CD8-positive, alpha-beta memory T cell (primary cell): ENCODE measurements at regions of chr7 and their contacts with region 1.

Region 1: DNA sequence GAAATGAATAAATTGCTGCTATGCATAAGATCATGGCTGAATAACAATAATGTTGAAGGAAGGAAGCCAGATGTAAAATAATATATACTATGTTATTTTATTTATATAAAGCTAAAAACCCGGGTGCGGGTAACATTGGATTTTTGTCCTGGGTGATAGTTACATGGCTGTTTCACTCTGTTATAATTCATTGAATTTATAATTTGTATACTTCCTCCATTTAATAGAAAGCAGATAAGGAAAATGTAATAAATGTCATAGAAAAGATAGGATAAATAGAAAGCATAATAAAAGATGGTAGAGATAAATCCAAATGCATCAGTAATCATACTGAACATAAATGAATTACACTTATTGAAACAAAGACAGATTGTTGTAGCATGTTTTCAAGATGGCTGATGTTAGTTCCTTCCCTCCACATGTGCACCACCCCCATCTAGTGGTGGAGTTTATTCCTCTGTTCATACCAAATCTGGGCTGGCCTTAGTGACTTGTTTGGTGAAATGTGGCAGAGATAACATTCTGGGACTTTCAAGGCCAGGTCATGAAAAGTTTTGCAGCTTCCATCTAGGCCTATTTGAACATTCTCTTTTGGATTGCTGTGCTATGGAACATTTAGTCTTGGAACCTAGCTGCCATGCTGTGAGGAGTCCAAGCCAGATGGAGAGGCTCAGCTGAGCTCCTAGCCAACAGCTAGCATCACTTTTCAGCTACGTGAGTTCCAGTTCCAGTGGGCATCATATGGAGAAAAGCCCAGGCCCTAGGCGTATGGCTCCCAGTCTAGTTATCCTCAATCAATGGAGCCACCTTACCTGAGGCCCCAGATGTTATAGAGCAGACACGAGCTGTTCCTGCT is 46.9 kb downstream of the AHCYL2 start:
- DNase-seq: peak; percentile 35 to 74 (median 58)
- H3K4me3 ChIP-seq: no peak overlapping the region
- H3K4me3 Mint-ChIP-seq: peak overlapping the region in 3 of 7 donors; percentile 53 to 62 (median 57)
- H3K27ac ChIP-seq: no peak overlapping the region
- H3K27ac Mint-ChIP-seq: peak overlapping the region in 3 of 8 donors; percentile 26 to 81 (median 71)
- H3K4me1 ChIP-seq: no peaks in the 10 kb centered on the region
- H3K4me1 Mint-ChIP-seq: peaks cover 3 to 5% (median 3%) of the 10 kb centered on the region in 3 donors
- H3K27me3 ChIP-seq: no peaks in the 10 kb centered on the region
- H3K27me3 Mint-ChIP-seq: no peaks in the 10 kb centered on the region

Region 2: DNA sequence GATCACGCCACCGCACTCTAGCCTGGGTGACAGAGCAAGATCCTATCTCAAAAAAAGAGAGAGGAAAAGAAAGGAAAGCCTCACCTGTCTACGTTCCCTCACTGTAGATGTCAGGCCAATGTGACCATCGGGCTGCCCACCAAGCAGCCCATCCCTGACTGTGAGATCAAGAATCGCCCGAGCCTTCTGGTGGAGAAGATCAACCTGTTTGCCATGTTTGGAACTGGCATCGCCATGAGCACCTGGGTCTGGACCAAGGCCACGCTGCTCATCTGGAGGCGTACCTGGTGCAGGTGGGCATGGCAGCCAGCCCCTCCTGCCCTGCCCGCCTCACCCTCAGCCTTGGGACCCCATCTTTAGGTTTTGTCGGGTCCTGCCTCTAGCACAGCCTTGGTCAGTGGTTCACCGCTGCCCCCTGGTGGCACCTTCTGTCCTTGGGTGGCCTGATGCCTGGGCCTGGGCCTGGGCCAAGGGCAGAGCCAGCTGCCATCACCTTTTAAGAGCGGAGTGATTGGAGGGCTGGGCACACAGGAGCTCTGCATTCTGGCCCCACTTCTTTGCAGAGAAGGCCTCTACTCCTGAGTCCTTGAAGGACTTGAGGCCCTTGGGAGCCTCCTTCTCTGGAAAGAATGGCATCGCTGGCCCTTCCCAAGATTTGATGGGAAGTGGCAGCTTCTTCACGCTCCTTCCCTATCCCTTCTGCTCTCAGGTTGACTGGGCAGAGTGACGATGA is 61.3 kb before region 1 on chr7:
- CTCF ChIA-PET with region 1: interaction called, 13 read pairs
- POLR2A ChIA-PET with region 1: no interaction called
- DNase-seq: peak; percentile 30 to 65 (median 39)
- H3K4me3 ChIP-seq: no peak overlapping the region
- H3K4me3 Mint-ChIP-seq: no peak overlapping the region
- H3K27ac ChIP-seq: no peak overlapping the region
- H3K27ac Mint-ChIP-seq: peak overlapping the region in 1 of 8 donors; percentile 60
- H3K4me1 ChIP-seq: no peaks in the 10 kb centered on the region
- H3K4me1 Mint-ChIP-seq: peaks cover 6 to 10% (median 8%) of the 10 kb centered on the region in 3 donors
- H3K27me3 ChIP-seq: no peaks in the 10 kb centered on the region
- H3K27me3 Mint-ChIP-seq: peaks cover 4 to 7% of the 10 kb centered on the region in 2 donors

Region 3: DNA sequence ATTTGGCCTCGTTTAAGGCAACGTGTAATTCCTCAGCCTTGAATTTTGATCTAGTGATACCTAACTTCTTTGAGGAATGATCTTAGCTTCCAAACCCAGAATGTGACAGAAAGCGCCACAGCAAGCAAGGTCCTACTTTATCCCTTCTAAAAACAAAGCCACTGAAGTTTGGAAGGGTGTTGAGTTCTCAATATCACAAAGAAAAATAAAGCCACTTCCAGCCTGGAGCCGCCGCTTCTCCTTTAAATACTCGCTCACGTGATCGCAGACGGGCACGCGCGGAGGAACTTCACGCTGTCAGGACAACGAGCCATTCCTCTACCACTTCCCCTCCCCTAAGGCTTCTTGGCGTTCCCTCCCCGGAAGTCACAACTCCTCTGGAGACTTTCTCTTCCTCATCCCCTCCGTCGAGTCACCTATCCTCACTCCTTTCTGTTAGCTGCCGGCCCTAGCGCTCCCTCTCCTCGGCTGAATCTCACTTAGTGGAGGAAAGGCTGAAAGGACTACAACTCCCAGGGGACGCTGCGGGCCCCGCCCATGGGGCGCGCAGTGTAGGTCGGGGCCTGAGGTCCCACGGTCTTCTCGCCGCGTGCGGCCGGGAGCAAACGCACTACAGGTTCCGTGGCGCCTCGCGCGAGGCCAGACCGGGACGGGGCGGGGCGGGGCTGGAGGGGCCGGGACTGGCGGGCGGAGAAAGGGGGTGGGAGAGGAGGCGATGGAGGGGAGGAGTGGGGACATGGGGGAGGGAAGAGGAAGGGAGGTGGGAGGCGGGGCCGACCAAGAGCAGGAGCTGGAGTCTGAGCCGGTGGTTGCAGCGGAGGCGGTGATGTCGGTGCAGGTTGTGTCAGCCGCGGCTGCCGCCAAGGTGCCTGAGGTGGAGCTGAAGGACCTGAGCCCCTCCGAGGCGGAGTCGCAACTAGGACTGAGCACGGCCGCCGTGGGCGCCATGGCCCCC is 47.2 kb before region 1 on chr7 and contains the start of gene AHCYL2:
- CTCF ChIA-PET with region 1: interaction called, 178 read pairs
- POLR2A ChIA-PET with region 1: interaction called, 7 read pairs
- DNase-seq: peak; percentile 93 to 98 (median 95)
- H3K4me3 ChIP-seq: peak within 1 kb of the TSS; percentile 85
- H3K4me3 Mint-ChIP-seq: peak within 1 kb of the TSS; percentile 92 to 99 (median 96)
- H3K27ac ChIP-seq: peak within 1 kb of the TSS; percentile 88
- H3K27ac Mint-ChIP-seq: peak within 1 kb of the TSS; percentile 81 to 100 (median 97)
- H3K4me1 ChIP-seq: peaks cover 17% of the 10 kb centered on the region
- H3K4me1 Mint-ChIP-seq: peaks cover 23 to 47% (median 35%) of the 10 kb centered on the region in 3 donors
- H3K27me3 ChIP-seq: no peaks in the 10 kb centered on the region
- H3K27me3 Mint-ChIP-seq: no peaks in the 10 kb centered on the region
- total RNA-seq, gene AHCYL2: 8.2 to 8.4 TPM

Region 4: GRCh38 chr7:129298268-129298893 is 26.7 kb after region 1 on chr7:
- CTCF ChIA-PET with region 1: interaction called, 10 read pairs
- POLR2A ChIA-PET with region 1: no interaction called
- DNase-seq: peak; percentile 19 to 55 (median 27)
- H3K4me3 ChIP-seq: no peak overlapping the region
- H3K4me3 Mint-ChIP-seq: no peak overlapping the region
- H3K27ac ChIP-seq: no peak overlapping the region
- H3K27ac Mint-ChIP-seq: no peak overlapping the region
- H3K4me1 ChIP-seq: no peaks in the 10 kb centered on the region
- H3K4me1 Mint-ChIP-seq: peaks cover 0 to 1% (median 0%) of the 10 kb centered on the region in 3 donors
- H3K27me3 ChIP-seq: no peaks in the 10 kb centered on the region
- H3K27me3 Mint-ChIP-seq: no peaks in the 10 kb centered on the region